Spleen (tissue), 13 donors: ENCODE measurements at regions of chr2 and their contacts with region 1.

Region 1: GRCh38 chr2:60581433-60582282 is 28.2 kb upstream of the BCL11A start:
- DNase-seq: peak; percentile 95
- H3K4me3 ChIP-seq: peak overlapping the region in 6 of 8 donors; percentile 10 to 65 (median 28)
- H3K27ac ChIP-seq: no peak overlapping the region
- H3K4me1 ChIP-seq: peaks cover 0 to 13% (median 10%) of the 10 kb centered on the region in 6 donors
- H3K27me3 ChIP-seq: peaks cover 0 to 33% (median 10%) of the 10 kb centered on the region in 7 donors
- CTCF ChIP-seq: peak; percentile 70 to 98 (median 94)
- POLR2A ChIP-seq: no peak

Region 2: DNA sequence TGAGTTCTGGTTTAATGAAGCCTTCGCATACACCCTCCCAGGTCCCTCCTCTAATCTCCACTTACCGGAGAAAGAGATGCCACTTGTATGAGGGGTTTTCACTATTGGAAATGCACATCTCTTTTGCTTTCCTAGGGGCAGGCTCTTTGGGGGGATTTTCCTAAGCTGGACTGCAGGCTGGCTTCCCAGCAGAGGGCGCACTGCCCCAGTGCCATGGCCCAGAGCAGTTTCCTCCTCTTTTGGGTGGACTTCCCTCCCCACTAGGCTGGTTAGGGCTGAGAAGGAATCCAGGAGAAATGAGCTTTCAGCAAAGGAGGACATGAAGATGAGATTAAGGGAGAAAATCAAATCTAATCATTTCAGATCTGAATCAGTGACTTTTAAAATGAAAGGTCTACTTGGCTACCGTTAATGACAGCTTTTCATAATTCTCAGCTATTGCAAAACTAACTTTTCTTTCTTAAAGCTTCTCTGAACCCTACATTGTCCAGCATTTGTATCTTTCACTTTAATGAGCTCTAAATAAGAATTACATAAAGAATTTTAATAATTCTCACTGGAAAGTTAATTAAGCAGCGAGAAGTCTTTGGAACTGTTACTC is 1556.4 kb before region 1 on chr2:
- intact Hi-C with region 1: loop called (anchors 10 kb)
- DNase-seq: peak; percentile 76
- H3K4me3 ChIP-seq: no peak overlapping the region
- H3K27ac ChIP-seq: no peak overlapping the region
- H3K4me1 ChIP-seq: peaks cover 0 to 5% (median 0%) of the 10 kb centered on the region in 6 donors
- H3K27me3 ChIP-seq: peaks cover 0 to 5% (median 0%) of the 10 kb centered on the region in 7 donors
- CTCF ChIP-seq: peak; percentile 24 to 74 (median 57)
- POLR2A ChIP-seq: no peak

Region 3: GRCh38 chr2:60530660-60531281 is 50.9 kb before region 1 on chr2:
- intact Hi-C with region 1: no loop called
- DNase-seq: no peak
- H3K4me3 ChIP-seq: peak overlapping the region in 2 of 8 donors; percentile 3 to 18
- H3K27ac ChIP-seq: peak overlapping the region in 4 of 8 donors; percentile 49 to 66 (median 56)
- H3K4me1 ChIP-seq: peaks cover 2 to 99% (median 79%) of the 10 kb centered on the region in 6 donors
- H3K27me3 ChIP-seq: peaks cover 0 to 3% (median 0%) of the 10 kb centered on the region in 7 donors
- CTCF ChIP-seq: no peak
- POLR2A ChIP-seq: no peak